T-cell (primary cell): ENCODE measurements at regions of chr17 and their contacts with region 1.

Region 1: GRCh38 chr17:75405365-75406221 is at the start of gene GRB2:
- DNase-seq: peak; percentile 99 to 100 (median 99)
- ATAC-seq: peak; percentile 82 to 92 (median 88)
- H3K4me3 ChIP-seq: peak within 1 kb of the TSS; percentile 98 to 100
- H3K4me3 Mint-ChIP-seq: peak within 1 kb of the TSS; percentile 93 to 98 (median 97)
- H3K27ac ChIP-seq: peak within 1 kb of the TSS; percentile 80
- H3K27ac Mint-ChIP-seq: peak within 1 kb of the TSS; percentile 93 to 94
- H3K4me1 ChIP-seq: peaks cover 25 to 29% of the 10 kb centered on the region in 2 experiments
- H3K4me1 Mint-ChIP-seq: peaks cover 43 to 50% (median 46%) of the 10 kb centered on the region in 3 donors
- H3K27me3 ChIP-seq: no peaks in the 10 kb centered on the region
- H3K27me3 Mint-ChIP-seq: peaks cover 0 to 2% of the 10 kb centered on the region in 2 donors
- total RNA-seq, gene GRB2: 103 to 133 (median 130) TPM

Region 2: DNA sequence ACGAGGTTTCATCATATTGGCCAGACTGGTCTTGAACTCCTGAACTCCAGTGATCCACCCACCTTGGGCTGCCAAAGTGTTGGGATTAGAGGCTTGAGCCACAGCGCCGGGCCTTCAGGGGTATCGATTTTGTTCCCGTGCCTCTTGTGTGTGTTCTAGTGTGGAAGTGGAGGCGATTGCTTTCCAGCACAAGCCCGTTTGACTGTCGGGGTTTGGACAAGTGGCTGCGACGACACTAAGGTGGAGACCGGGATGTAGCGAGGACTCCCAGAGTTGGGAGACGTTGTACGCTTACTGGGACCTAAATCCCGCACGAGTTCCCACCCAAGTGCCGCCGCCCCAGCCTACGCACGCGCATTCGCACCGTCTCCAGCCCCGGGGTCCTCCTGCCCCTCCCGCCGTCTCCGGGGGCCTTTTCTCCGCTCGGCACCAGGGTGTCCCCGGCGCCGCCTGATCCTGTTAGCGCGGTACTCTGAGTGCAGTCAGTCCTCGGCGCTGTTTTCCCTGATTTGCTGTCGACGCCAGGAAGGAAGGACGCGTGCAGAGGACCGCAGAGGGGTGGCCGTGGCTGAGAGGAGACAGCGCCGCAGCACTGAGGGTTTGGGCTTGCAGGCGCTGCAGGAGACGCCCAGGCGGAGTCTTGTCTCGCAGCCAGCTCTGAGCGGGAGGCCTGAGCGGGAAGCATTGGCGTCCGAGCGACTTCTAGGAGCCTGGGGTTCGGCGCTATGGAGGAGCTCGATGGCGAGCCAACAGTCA is 200.4 kb before region 1 on chr17 and contains the start of gene NUP85:
- CTCF ChIA-PET with region 1: interaction called, 4 to 10 read pairs
- POLR2A ChIA-PET with region 1: no interaction called
- DNase-seq: peak; percentile 78 to 95 (median 89)
- ATAC-seq: peak; percentile 85 to 95 (median 92)
- H3K4me3 ChIP-seq: peak within 1 kb of the TSS; percentile 95 to 99
- H3K4me3 Mint-ChIP-seq: peak within 1 kb of the TSS; percentile 93 to 95 (median 94)
- H3K27ac ChIP-seq: peak within 1 kb of the TSS; percentile 91
- H3K27ac Mint-ChIP-seq: peak within 1 kb of the TSS; percentile 99 to 100
- H3K4me1 ChIP-seq: peaks cover 8 to 25% of the 10 kb centered on the region in 2 experiments
- H3K4me1 Mint-ChIP-seq: peaks cover 23 to 37% (median 32%) of the 10 kb centered on the region in 3 donors
- H3K27me3 ChIP-seq: no peaks in the 10 kb centered on the region
- H3K27me3 Mint-ChIP-seq: no peaks in the 10 kb centered on the region
- total RNA-seq, gene NUP85: 56.2 to 128 (median 106) TPM

Region 3: DNA sequence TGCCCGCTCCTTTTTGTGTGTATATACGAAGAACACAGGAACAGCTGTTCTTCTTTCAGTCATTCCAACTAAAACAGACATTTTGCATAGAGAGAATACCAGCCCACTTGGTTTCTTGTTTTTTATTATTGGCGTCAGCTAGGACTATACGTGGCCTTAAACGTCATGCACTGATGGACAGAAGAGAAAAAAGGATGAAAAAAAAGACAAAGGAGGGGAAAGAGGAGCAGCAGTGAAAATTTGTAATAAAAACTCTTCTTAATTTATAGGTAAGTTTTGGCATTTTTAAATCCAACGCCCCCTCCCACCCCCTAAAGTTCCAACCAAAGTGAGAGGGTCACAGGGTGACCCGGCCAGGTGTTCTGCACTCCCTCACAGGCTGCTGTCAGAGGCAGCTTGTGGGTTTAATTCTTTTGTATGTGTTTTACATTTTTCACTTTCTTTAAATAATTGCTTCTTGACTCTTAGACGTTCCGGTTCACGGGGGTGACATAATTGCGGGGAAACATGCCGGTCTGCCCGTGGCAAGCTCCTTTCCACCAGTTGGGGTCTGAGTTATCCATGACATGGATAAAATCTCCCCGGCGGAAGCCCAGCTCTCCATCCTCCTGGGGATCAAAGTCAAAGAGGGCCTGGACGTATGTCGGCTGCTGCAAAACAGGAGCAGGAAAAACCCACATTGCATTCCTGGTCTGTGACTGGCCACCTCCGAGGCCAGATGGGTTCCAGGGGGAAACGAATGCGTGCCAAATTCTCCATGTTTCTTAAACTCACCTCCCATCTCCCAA is 85.5 kb before region 1 on chr17:
- CTCF ChIA-PET with region 1: interaction called, 3 to 17 read pairs
- POLR2A ChIA-PET with region 1: interaction called, 3 to 8 read pairs
- DNase-seq: no peak
- ATAC-seq: no peak
- H3K4me3 ChIP-seq: no peak overlapping the region
- H3K4me3 Mint-ChIP-seq: no peak overlapping the region
- H3K27ac ChIP-seq: no peak overlapping the region
- H3K27ac Mint-ChIP-seq: no peak overlapping the region
- H3K4me1 ChIP-seq: peaks cover 0 to 8% of the 10 kb centered on the region in 2 experiments
- H3K4me1 Mint-ChIP-seq: peaks cover 5 to 8% (median 8%) of the 10 kb centered on the region in 3 donors
- H3K27me3 ChIP-seq: peaks cover 0 to 3% of the 10 kb centered on the region in 2 experiments
- H3K27me3 Mint-ChIP-seq: no peaks in the 10 kb centered on the region

Region 4: DNA sequence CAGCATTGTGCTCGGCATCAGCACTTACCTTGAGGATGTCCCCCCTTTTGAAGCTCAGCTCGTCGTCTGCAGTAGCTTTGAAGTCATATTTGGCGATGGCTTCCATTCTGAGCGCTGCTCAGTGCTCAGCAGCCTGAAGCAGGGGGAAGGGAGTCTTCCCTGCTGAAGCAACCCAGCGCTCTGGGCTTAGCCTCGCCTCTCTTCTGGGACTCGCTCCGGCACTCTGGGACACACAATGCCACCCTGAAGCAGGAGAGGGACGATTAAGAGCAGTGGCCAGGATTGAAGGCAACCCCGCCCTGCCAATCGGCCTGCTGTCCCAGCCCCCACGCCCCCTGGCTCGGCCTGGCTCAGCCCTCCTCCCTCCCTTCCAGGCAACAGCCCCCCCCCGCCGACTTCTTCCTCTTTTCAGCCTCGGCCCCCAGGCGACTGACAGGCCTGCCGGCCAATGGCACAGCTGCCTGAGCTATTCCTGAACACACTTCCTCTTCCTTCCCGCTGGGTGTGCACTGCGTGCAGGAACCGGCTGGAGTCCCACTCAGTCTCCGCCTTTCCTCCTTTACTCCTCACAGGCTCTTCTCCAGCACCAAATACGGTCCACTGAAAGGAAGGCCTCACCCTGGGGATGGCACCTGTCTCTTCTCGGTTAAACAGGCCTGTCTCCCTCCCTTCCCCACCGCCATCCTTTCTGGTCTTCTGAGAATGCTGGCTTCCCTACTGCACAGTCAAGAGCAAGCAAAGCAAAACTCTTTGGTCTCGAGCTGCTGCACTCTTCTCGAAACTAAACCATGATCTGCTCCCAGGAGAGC is 11.9 kb before region 1 on chr17:
- CTCF ChIA-PET with region 1: interaction called, 3 to 5 read pairs
- POLR2A ChIA-PET with region 1: interaction called in 1 of 2 experiments, 15 read pairs
- DNase-seq: peak; percentile 59 to 89 (median 72)
- ATAC-seq: peak; percentile 87 to 93 (median 92)
- H3K4me3 ChIP-seq: peak overlapping the region; percentile 53 to 75
- H3K4me3 Mint-ChIP-seq: peak overlapping the region; percentile 88 to 91 (median 89)
- H3K27ac ChIP-seq: peak overlapping the region; percentile 38
- H3K27ac Mint-ChIP-seq: peak overlapping the region; percentile 79 to 92
- H3K4me1 ChIP-seq: peaks cover 39 to 46% of the 10 kb centered on the region in 2 experiments
- H3K4me1 Mint-ChIP-seq: peaks cover 84 to 93% (median 85%) of the 10 kb centered on the region in 3 donors
- H3K27me3 ChIP-seq: no peaks in the 10 kb centered on the region
- H3K27me3 Mint-ChIP-seq: no peaks in the 10 kb centered on the region